Naive thymus-derived CD4-positive, alpha-beta T cell (primary cell): ENCODE measurements at regions of chr6 and their contacts with region 1.

Region 1: GRCh38 chr6:108866798-108867197 is 18.6 kb downstream of the ARMC2 start:
- DNase-seq: no peak
- ATAC-seq: no peak
- H3K4me3 ChIP-seq: no peak overlapping the region
- H3K4me3 Mint-ChIP-seq: no peak overlapping the region
- H3K27ac ChIP-seq: no peak overlapping the region
- H3K27ac Mint-ChIP-seq: no peak overlapping the region
- H3K4me1 ChIP-seq: peaks cover 0 to 12% of the 10 kb centered on the region in 2 donors
- H3K4me1 Mint-ChIP-seq: peaks cover 3 to 44% (median 14%) of the 10 kb centered on the region in 7 donors
- H3K27me3 ChIP-seq: no peaks in the 10 kb centered on the region
- H3K27me3 Mint-ChIP-seq: peaks cover 0 to 7% (median 0%) of the 10 kb centered on the region in 5 donors

Region 2: DNA sequence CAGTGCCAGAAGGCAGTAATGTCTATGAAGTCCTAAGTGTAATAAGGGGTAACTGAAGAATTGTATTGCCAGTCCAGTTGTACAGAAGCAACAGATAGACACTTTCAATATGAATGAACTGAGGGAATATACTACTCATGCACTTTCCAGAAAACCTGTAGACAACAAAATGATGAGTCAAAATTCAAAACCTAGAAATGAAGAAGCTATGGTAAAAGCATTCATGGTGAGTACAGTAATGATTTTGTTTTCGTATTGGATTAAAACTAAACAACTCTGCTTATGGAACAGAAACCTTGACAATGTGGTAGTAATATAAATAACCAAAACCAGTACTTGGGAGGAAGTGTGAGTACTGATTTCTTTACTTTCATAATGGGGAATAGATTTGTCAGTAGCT is 16.4 kb after region 1 on chr6:
- CTCF ChIA-PET with region 1: interaction called, 3 read pairs
- POLR2A ChIA-PET with region 1: no interaction called
- intact Hi-C with region 1: loop called in 1 of 2 experiments (anchors 1 kb)
- DNase-seq: no peak
- ATAC-seq: no peak
- H3K4me3 ChIP-seq: no peak overlapping the region
- H3K4me3 Mint-ChIP-seq: peak overlapping the region in 1 of 10 donors; percentile 24
- H3K27ac ChIP-seq: no peak overlapping the region
- H3K27ac Mint-ChIP-seq: peak overlapping the region in 1 of 9 donors; percentile 67
- H3K4me1 ChIP-seq: no peaks in the 10 kb centered on the region
- H3K4me1 Mint-ChIP-seq: peaks cover 0 to 39% (median 5%) of the 10 kb centered on the region in 7 donors
- H3K27me3 ChIP-seq: no peaks in the 10 kb centered on the region
- H3K27me3 Mint-ChIP-seq: peaks cover 0 to 42% (median 0%) of the 10 kb centered on the region in 5 donors